CD8-positive, alpha-beta memory T cell (primary cell): ENCODE measurements at regions of chr7 and their contacts with region 1.

Region 1: GRCh38 chr7:39746103-39746819 is 122.9 kb downstream of the RALA start:
- DNase-seq: peak; percentile 30 to 64 (median 38)
- H3K4me3 ChIP-seq: no peak overlapping the region
- H3K4me3 Mint-ChIP-seq: no peak overlapping the region
- H3K27ac ChIP-seq: no peak overlapping the region
- H3K27ac Mint-ChIP-seq: peak overlapping the region in 5 of 8 donors; percentile 26 to 60 (median 42)
- H3K4me1 ChIP-seq: no peaks in the 10 kb centered on the region
- H3K4me1 Mint-ChIP-seq: peaks cover 8 to 12% (median 9%) of the 10 kb centered on the region in 3 donors
- H3K27me3 ChIP-seq: no peaks in the 10 kb centered on the region
- H3K27me3 Mint-ChIP-seq: no peaks in the 10 kb centered on the region

Region 2: GRCh38 chr7:39554583-39555165 is 191.6 kb before region 1 on chr7:
- CTCF ChIA-PET with region 1: no interaction called
- POLR2A ChIA-PET with region 1: no interaction called
- DNase-seq: no peak
- H3K4me3 ChIP-seq: no peak overlapping the region
- H3K4me3 Mint-ChIP-seq: no peak overlapping the region
- H3K27ac ChIP-seq: no peak overlapping the region
- H3K27ac Mint-ChIP-seq: no peak overlapping the region
- H3K4me1 ChIP-seq: no peaks in the 10 kb centered on the region
- H3K4me1 Mint-ChIP-seq: no peaks in the 10 kb centered on the region
- H3K27me3 ChIP-seq: no peaks in the 10 kb centered on the region
- H3K27me3 Mint-ChIP-seq: peaks cover 7 to 42% of the 10 kb centered on the region in 2 donors

Region 3: GRCh38 chr7:39683216-39683845 is 62.9 kb before region 1 on chr7:
- CTCF ChIA-PET with region 1: no interaction called
- POLR2A ChIA-PET with region 1: no interaction called
- DNase-seq: no peak
- H3K4me3 ChIP-seq: no peak overlapping the region
- H3K4me3 Mint-ChIP-seq: no peak overlapping the region
- H3K27ac ChIP-seq: no peak overlapping the region
- H3K27ac Mint-ChIP-seq: peak overlapping the region in 5 of 8 donors; percentile 16 to 71 (median 35)
- H3K4me1 ChIP-seq: no peaks in the 10 kb centered on the region
- H3K4me1 Mint-ChIP-seq: peaks cover 34 to 60% (median 54%) of the 10 kb centered on the region in 3 donors
- H3K27me3 ChIP-seq: no peaks in the 10 kb centered on the region
- H3K27me3 Mint-ChIP-seq: no peaks in the 10 kb centered on the region

Region 4: DNA sequence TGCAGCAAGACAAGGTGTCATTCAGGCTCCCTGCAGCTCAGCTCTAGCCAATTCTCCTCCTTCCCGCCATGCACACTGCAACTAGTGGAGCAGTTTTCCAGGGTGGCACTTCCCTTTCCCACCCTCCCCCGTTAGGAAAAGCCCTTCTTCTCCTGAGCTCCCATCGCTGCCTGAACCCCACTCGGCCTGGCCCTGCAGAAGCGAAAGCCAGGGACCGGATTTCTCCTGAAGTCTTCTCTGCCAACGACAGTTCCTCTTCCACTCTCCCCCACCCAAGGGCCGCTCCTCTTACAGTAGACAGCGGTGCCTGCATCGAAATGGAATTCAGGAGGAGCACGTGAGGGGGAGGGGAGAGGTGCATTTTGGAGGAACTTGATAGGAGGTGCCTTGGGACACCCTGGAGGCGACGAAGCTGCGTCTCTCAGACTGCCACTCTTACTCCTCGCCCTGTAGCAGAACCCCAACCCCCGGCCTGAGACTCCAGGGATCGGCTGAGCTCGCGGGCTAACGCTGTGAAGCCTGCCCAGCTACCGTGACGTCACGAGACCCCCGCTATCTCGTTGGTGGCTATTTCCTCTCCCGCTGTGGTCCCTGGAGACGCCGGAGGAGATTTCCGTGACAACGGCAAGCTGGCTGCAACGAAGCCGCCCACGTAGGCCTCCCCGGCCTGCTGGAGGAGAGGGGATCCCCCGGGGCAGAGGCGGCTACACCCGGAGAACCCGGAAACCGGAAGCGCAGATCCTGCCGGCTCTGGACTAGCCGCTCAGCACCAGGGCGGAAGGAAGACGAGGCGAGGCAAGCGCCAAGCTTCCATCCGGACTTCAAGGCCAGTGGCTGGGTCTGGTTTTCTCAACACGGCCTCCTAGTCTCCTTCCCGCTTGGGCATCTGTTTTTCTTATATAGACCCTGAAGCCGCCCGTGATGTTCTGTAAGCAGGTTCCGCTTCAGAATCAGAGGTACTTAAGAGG is 13.1 kb before region 1 on chr7:
- CTCF ChIA-PET with region 1: interaction called, 51 read pairs
- POLR2A ChIA-PET with region 1: no interaction called
- DNase-seq: peak; percentile 87 to 97 (median 92)
- H3K4me3 ChIP-seq: peak overlapping the region; percentile 75
- H3K4me3 Mint-ChIP-seq: peak overlapping the region; percentile 91 to 98 (median 94)
- H3K27ac ChIP-seq: peak overlapping the region; percentile 85
- H3K27ac Mint-ChIP-seq: peak overlapping the region; percentile 91 to 99 (median 97)
- H3K4me1 ChIP-seq: peaks cover 25% of the 10 kb centered on the region
- H3K4me1 Mint-ChIP-seq: peaks cover 41 to 65% (median 47%) of the 10 kb centered on the region in 3 donors
- H3K27me3 ChIP-seq: no peaks in the 10 kb centered on the region
- H3K27me3 Mint-ChIP-seq: no peaks in the 10 kb centered on the region